Endothelial cell of umbilical vein (primary cell): ENCODE measurements at regions of chr12 and their contacts with region 1.

Region 1: GRCh38 chr12:88897723-88898122 is 317.5 kb upstream of the KITLG start:
- DNase-seq: peak; percentile 95
- H3K4me3 ChIP-seq: no peak overlapping the region
- H3K27ac ChIP-seq: peak overlapping the region; percentile 98
- H3K4me1 ChIP-seq: peaks cover 31% of the 10 kb centered on the region
- H3K27me3 ChIP-seq: no peaks in the 10 kb centered on the region
- CTCF ChIP-seq: no peak
- POLR2A ChIP-seq: no peak

Region 2: GRCh38 chr12:88141770-88142609 is 755.7 kb before region 1 on chr12 and contains the starts of genes CEP290 and TMTC3:
- CTCF ChIA-PET with region 1: no interaction called
- POLR2A ChIA-PET with region 1: no interaction called
- dilution Hi-C with region 1: no loop called
- intact Hi-C with region 1: loop called (anchors 5 kb)
- DNase-seq: peak; percentile 99
- H3K4me3 ChIP-seq: peak within 1 kb of the TSS; percentile 23 to 88 (median 68)
- H3K27ac ChIP-seq: peak within 1 kb of the TSS; percentile 41
- H3K4me1 ChIP-seq: peaks cover 15% of the 10 kb centered on the region
- H3K27me3 ChIP-seq: no peaks in the 10 kb centered on the region
- CTCF ChIP-seq: no peak
- POLR2A ChIP-seq: peak; percentile 71
- total RNA-seq, gene CEP290: 16.5 and 19.1 TPM in 2 replicates
- total RNA-seq, gene TMTC3: 34.5 and 36.5 TPM in 2 replicates

Region 3: GRCh38 chr12:88553941-88554658 is 343.6 kb before region 1 on chr12:
- CTCF ChIA-PET with region 1: no interaction called
- POLR2A ChIA-PET with region 1: no interaction called
- dilution Hi-C with region 1: no loop called
- intact Hi-C with region 1: loop called (anchors 1 kb)
- DNase-seq: peak; percentile 87
- H3K4me3 ChIP-seq: no peak overlapping the region
- H3K27ac ChIP-seq: no peak overlapping the region
- H3K4me1 ChIP-seq: peaks cover 26% of the 10 kb centered on the region
- H3K27me3 ChIP-seq: no peaks in the 10 kb centered on the region
- CTCF ChIP-seq: no peak
- POLR2A ChIP-seq: no peak

Region 4: DNA sequence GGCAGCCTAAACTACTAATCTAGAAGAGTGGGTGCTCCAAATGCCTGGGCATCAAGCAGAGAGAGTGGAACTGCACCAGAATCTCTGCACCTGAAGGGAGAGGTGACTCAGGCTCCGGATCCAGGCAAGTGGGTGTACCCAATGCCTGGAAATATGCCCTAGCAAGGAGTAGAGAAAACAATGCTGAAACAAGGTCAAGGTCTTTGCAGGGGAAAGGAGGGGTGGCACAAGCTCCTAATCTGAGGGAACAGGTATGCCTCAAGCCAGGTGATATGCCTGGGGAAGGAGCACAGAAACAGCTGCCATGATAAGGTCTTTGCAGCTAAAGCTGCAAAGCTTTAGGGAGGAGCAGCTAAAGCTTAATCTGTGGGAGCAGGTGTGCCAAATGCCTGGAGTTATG is 181.5 kb before region 1 on chr12:
- CTCF ChIA-PET with region 1: no interaction called
- POLR2A ChIA-PET with region 1: no interaction called
- dilution Hi-C with region 1: no loop called
- intact Hi-C with region 1: loop called (anchors 1 kb)
- DNase-seq: no peak
- H3K4me3 ChIP-seq: no peak overlapping the region
- H3K27ac ChIP-seq: no peak overlapping the region
- H3K4me1 ChIP-seq: peaks cover 5% of the 10 kb centered on the region
- H3K27me3 ChIP-seq: no peaks in the 10 kb centered on the region
- CTCF ChIP-seq: no peak
- POLR2A ChIP-seq: no peak

Region 5: DNA sequence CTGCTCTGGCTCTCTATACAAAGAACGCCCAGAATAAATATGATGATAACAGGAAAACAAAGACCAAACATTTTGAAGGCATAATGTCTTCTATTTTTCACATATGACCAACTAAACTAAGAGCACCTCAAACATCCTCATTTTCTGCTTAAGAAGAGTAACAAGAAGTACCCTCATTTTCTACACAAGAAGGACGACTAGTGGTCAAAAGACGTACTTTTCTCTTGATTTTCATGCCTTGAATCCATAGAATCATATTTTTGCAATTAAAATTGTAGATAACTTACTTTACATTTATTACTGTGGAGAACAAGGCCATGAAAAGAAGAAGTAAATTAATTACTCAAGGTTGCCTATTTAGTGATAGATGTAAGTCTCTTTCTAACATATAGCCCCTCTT is 95.9 kb after region 1 on chr12:
- CTCF ChIA-PET with region 1: interaction called, 27 read pairs
- POLR2A ChIA-PET with region 1: interaction called, 3 read pairs
- dilution Hi-C with region 1: no loop called
- intact Hi-C with region 1: loop called (anchors 1 kb)
- DNase-seq: peak; percentile 84
- H3K4me3 ChIP-seq: no peak overlapping the region
- H3K27ac ChIP-seq: no peak overlapping the region
- H3K4me1 ChIP-seq: peaks cover 9% of the 10 kb centered on the region
- H3K27me3 ChIP-seq: no peaks in the 10 kb centered on the region
- CTCF ChIP-seq: peak; percentile 36 to 37
- POLR2A ChIP-seq: no peak

Region 6: DNA sequence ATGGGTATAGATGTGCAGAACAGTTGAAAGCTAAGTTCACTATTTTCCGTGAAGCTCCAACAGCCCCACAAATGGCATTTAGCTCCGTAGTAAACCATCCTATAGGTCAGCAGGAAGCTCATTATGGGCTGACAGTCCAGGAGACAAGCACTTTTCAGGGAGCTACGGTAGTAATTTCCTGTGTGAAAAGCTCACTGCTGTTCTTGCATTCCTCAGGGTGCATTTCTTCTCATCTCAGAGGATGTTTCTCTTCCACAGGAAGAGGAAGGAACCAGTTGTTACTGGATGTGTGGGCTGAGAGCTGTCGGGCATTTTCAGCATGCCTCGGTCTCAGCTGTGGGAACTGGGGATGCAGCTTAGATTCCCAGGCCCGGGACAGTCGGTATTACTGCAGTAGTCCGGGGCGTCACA is 554.1 kb after region 1 on chr12:
- CTCF ChIA-PET with region 1: no interaction called
- POLR2A ChIA-PET with region 1: no interaction called
- dilution Hi-C with region 1: no loop called
- intact Hi-C with region 1: loop called (anchors 2 kb)
- DNase-seq: peak; percentile 74
- H3K4me3 ChIP-seq: no peak overlapping the region
- H3K27ac ChIP-seq: peak overlapping the region; percentile 65
- H3K4me1 ChIP-seq: peaks cover 53% of the 10 kb centered on the region
- H3K27me3 ChIP-seq: no peaks in the 10 kb centered on the region
- CTCF ChIP-seq: no peak
- POLR2A ChIP-seq: peak; percentile 15